GM12878 (cell line): ENCODE measurements at regions of chr9 and their contacts with region 1.

Region 1: GRCh38 chr9:137070201-137070905 is at the start of gene SAPCD2:
- DNase-seq: no peak
- ATAC-seq: peak; percentile 88
- H3K4me3 ChIP-seq: peak within 1 kb of the TSS; percentile 80
- H3K27ac ChIP-seq: peak within 1 kb of the TSS; percentile 70
- H3K4me1 ChIP-seq: peaks cover 33% of the 10 kb centered on the region
- H3K27me3 ChIP-seq: no peaks in the 10 kb centered on the region
- CTCF ChIP-seq: no peak
- EP300 ChIP-seq: no peak
- POLR2A ChIP-seq: peak; percentile 69
- RAD21 ChIP-seq: no peak
- polyA plus RNA-seq, gene SAPCD2: 1.6 to 2.0 TPM

Region 2: DNA sequence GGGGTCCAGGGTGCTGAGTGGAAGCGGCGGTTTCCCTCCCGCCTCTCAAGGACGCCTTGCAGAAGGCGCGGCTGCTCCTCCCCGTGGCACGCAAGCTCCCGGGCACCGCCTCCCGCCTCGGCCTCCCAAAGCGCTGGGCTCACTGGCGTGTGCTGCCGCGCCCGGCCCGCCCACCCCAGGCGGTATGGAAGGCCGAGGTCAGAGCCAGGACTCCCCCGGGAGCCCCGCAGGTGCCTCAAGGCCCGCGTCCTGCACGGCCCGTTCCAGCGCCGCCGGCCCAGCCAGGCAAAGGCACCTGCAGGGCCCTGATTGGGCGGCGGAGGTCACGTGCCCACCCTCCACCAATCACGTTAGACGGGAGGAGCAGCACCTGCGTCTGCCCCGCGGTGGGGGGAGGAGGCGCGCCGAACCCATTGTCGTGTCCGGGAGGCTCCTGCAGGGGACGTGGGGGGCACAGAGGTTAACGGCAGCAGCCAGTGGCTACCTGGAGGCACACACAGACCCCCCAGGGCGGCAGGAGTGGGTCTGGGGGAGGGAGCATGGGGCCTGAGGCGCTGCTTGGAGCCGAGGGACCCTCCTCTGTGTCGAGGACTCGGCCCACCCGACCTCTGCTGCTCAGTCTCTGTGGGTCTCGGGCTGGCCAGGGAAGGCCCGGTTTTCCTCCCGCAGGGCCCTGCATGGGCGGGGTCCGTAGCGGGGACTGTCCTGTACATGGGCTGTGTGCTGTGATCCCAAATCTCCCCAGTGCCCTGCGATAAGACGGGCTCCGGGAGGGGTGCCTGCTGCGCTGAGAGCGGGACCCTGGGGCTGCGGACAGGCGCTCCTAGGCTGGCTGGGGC is 120.3 kb before region 1 on chr9:
- CTCF ChIA-PET with region 1: interaction called, 16 read pairs
- POLR2A ChIA-PET with region 1: interaction called, 4 read pairs
- RAD21 ChIA-PET with region 1: interaction called, 7 read pairs
- SMC1A ChIA-PET with region 1: interaction called, 9 read pairs
- in situ Hi-C with region 1: no loop called
- intact Hi-C with region 1: no loop called
- DNase-seq: peak; percentile 73
- ATAC-seq: peak; percentile 98
- H3K4me3 ChIP-seq: peak overlapping the region; percentile 77
- H3K27ac ChIP-seq: peak overlapping the region; percentile 53
- H3K4me1 ChIP-seq: peaks cover 7% of the 10 kb centered on the region
- H3K27me3 ChIP-seq: no peaks in the 10 kb centered on the region
- CTCF ChIP-seq: peak in 2 of 3 experiments; percentile 22 to 37; a peak in 2 of 6 replicates
- EP300 ChIP-seq: no peak
- POLR2A ChIP-seq: no peak
- RAD21 ChIP-seq: no peak

Region 3: GRCh38 chr9:136985027-136985602 is 85.2 kb before region 1 on chr9:
- CTCF ChIA-PET with region 1: no interaction called
- POLR2A ChIA-PET with region 1: no interaction called
- RAD21 ChIA-PET with region 1: no interaction called
- SMC1A ChIA-PET with region 1: no interaction called
- in situ Hi-C with region 1: no loop called
- intact Hi-C with region 1: no loop called
- DNase-seq: no peak
- ATAC-seq: no peak
- H3K4me3 ChIP-seq: no peak overlapping the region
- H3K27ac ChIP-seq: no peak overlapping the region
- H3K4me1 ChIP-seq: no peaks in the 10 kb centered on the region
- H3K27me3 ChIP-seq: peaks cover 5 to 6% of the 10 kb centered on the region in 2 experiments
- CTCF ChIP-seq: no peak
- EP300 ChIP-seq: no peak
- POLR2A ChIP-seq: no peak
- RAD21 ChIP-seq: no peak

Region 4: GRCh38 chr9:137046098-137046787 is 24.1 kb before region 1 on chr9 and contains the start of gene NPDC1:
- CTCF ChIA-PET with region 1: interaction called, 81 read pairs
- POLR2A ChIA-PET with region 1: no interaction called
- RAD21 ChIA-PET with region 1: interaction called, 25 read pairs
- SMC1A ChIA-PET with region 1: interaction called, 9 read pairs
- in situ Hi-C with region 1: no loop called
- intact Hi-C with region 1: no loop called
- DNase-seq: no peak
- ATAC-seq: peak; percentile 90
- H3K4me3 ChIP-seq: no peak within 1 kb of the TSS
- H3K27ac ChIP-seq: no peak within 1 kb of the TSS
- H3K4me1 ChIP-seq: no peaks in the 10 kb centered on the region
- H3K27me3 ChIP-seq: peaks cover 12 to 18% of the 10 kb centered on the region in 2 experiments; a peak in 3 of 4 replicates
- CTCF ChIP-seq: peak; percentile 82 to 95 (median 93)
- EP300 ChIP-seq: no peak
- POLR2A ChIP-seq: no peak
- RAD21 ChIP-seq: peak; percentile 63
- polyA plus RNA-seq, gene NPDC1: not detected

Region 5: GRCh38 chr9:137086531-137087408 is 16.4 kb after region 1 on chr9 and contains the start of gene MAN1B1:
- CTCF ChIA-PET with region 1: interaction called, 80 read pairs
- POLR2A ChIA-PET with region 1: interaction called, 22 read pairs
- RAD21 ChIA-PET with region 1: interaction called, 19 read pairs
- SMC1A ChIA-PET with region 1: interaction called, 30 read pairs
- in situ Hi-C with region 1: no loop called
- intact Hi-C with region 1: no loop called
- DNase-seq: peak; percentile 99
- ATAC-seq: peak; percentile 83
- H3K4me3 ChIP-seq: peak within 1 kb of the TSS; percentile 83
- H3K27ac ChIP-seq: peak within 1 kb of the TSS; percentile 90
- H3K4me1 ChIP-seq: peaks cover 29% of the 10 kb centered on the region
- H3K27me3 ChIP-seq: no peaks in the 10 kb centered on the region
- CTCF ChIP-seq: peak in 1 of 3 experiments; percentile 23; a peak in 1 of 6 replicates
- EP300 ChIP-seq: no peak
- POLR2A ChIP-seq: no peak
- RAD21 ChIP-seq: no peak
- polyA plus RNA-seq, gene MAN1B1: 0.71 to 2.0 TPM

Region 6: DNA sequence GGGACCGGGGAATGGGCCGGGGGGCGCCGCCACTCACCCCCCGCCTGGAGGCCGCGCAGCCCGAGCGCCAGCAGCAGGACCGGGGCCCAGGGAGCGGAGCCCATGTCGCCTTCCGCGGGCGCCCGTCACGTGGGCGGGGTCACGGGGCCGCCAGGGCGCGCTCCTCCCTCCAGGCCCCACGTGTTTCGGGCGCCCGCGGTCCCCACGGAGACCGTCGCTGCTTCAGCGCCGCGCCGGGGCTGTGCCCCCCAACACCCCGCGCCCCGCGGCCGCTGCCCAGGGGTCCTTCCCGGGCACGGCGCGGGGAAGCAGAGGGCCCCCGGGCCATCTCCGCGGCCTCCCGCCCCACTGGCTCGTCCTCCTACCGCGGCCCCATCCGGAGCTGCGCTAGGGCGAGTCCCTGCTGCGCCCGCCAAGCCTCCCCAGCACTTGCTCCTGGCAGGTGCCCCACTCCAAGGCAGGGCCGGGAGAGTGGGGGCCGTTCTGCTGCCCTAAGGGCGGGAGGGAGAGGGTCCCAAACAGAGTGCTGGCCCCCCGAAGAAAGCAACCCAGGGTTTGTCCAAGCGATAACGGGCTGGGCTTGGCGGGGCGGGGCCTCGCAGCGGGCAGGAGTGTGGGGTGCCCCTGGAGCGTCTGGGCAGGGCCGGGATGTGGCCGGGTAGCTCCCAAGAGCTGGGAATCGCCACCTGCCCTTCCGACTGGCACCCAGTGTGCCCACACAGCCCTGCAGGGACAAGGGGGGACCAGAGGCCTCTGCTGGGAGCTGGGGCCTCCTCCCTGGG is 44.4 kb after region 1 on chr9 and contains the start of gene DPP7:
- CTCF ChIA-PET with region 1: interaction called, 6 read pairs
- POLR2A ChIA-PET with region 1: interaction called, 4 read pairs
- RAD21 ChIA-PET with region 1: interaction called, 6 read pairs
- SMC1A ChIA-PET with region 1: interaction called, 3 read pairs
- in situ Hi-C with region 1: no loop called
- intact Hi-C with region 1: loop called (anchors 5 kb)
- DNase-seq: no peak
- ATAC-seq: peak; percentile 97
- H3K4me3 ChIP-seq: peak within 1 kb of the TSS; percentile 70
- H3K27ac ChIP-seq: peak within 1 kb of the TSS; percentile 58; the same call in 1 of the 2 replicates
- H3K4me1 ChIP-seq: peaks cover 6% of the 10 kb centered on the region; the same call in 1 of the 2 replicates
- H3K27me3 ChIP-seq: no peaks in the 10 kb centered on the region
- CTCF ChIP-seq: no peak
- EP300 ChIP-seq: no peak
- POLR2A ChIP-seq: peak; percentile 87
- RAD21 ChIP-seq: no peak
- polyA plus RNA-seq, gene DPP7: 0.68 to 10.0 TPM